Naive thymus-derived CD4-positive, alpha-beta T cell (primary cell): ENCODE measurements at regions of chr2 and their contacts with region 1.

Region 1: GRCh38 chr2:105896765-105897163 is 152.1 kb downstream of the NCK2 start:
- DNase-seq: no peak
- ATAC-seq: no peak
- H3K4me3 ChIP-seq: no peak overlapping the region
- H3K4me3 Mint-ChIP-seq: peak overlapping the region in 2 of 10 donors; percentile 13 to 52
- H3K27ac ChIP-seq: no peak overlapping the region
- H3K27ac Mint-ChIP-seq: peak overlapping the region in 7 of 9 donors; percentile 83 to 92 (median 88)
- H3K4me1 ChIP-seq: peaks cover 11 to 20% of the 10 kb centered on the region in 2 donors
- H3K4me1 Mint-ChIP-seq: peaks cover 17 to 80% (median 60%) of the 10 kb centered on the region in 7 donors
- H3K27me3 ChIP-seq: no peaks in the 10 kb centered on the region
- H3K27me3 Mint-ChIP-seq: no peaks in the 10 kb centered on the region

Region 2: DNA sequence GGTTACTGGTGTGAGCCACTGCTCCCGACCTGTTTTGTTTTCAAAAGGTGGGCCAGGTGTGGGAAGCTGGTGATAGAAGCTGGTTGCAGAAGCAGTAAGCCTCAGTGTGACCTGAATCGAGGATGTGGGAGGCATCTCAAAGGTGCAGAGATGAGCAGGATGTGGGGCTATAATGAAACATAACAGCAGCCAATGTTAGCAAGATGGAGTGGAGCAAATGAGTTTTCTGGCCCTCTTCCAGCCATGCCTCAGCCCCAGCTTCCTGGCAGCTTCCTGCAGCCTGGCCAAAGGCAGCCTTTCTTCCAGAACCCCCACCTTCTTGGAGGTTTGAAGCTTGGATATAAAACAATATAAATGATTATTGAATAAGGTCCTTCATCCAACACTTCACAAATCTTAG is 32.8 kb after region 1 on chr2:
- CTCF ChIA-PET with region 1: no interaction called
- POLR2A ChIA-PET with region 1: no interaction called
- intact Hi-C with region 1: loop called in 1 of 2 experiments (anchors 2 kb)
- DNase-seq: peak in 8 of 9 donors; percentile 31 to 79 (median 70)
- ATAC-seq: peak; percentile 72
- H3K4me3 ChIP-seq: no peak overlapping the region
- H3K4me3 Mint-ChIP-seq: peak overlapping the region in 9 of 10 donors; percentile 51 to 85 (median 64)
- H3K27ac ChIP-seq: peak overlapping the region; percentile 55
- H3K27ac Mint-ChIP-seq: peak overlapping the region; percentile 63 to 97 (median 90)
- H3K4me1 ChIP-seq: peaks cover 61 to 83% of the 10 kb centered on the region in 2 donors
- H3K4me1 Mint-ChIP-seq: peaks cover 48 to 76% (median 71%) of the 10 kb centered on the region in 7 donors
- H3K27me3 ChIP-seq: no peaks in the 10 kb centered on the region
- H3K27me3 Mint-ChIP-seq: no peaks in the 10 kb centered on the region

Region 3: GRCh38 chr2:105990624-105991023 is 93.9 kb after region 1 on chr2:
- CTCF ChIA-PET with region 1: no interaction called
- POLR2A ChIA-PET with region 1: no interaction called
- intact Hi-C with region 1: no loop called
- DNase-seq: no peak
- ATAC-seq: no peak
- H3K4me3 ChIP-seq: peak overlapping the region; percentile 8
- H3K4me3 Mint-ChIP-seq: peak overlapping the region in 3 of 10 donors; percentile 12 to 71 (median 68)
- H3K27ac ChIP-seq: no peak overlapping the region
- H3K27ac Mint-ChIP-seq: peak overlapping the region in 3 of 9 donors; percentile 43 to 74 (median 62)
- H3K4me1 ChIP-seq: peaks cover 7 to 27% of the 10 kb centered on the region in 2 donors
- H3K4me1 Mint-ChIP-seq: peaks cover 3 to 87% (median 50%) of the 10 kb centered on the region in 7 donors
- H3K27me3 ChIP-seq: no peaks in the 10 kb centered on the region
- H3K27me3 Mint-ChIP-seq: no peaks in the 10 kb centered on the region

Region 4: DNA sequence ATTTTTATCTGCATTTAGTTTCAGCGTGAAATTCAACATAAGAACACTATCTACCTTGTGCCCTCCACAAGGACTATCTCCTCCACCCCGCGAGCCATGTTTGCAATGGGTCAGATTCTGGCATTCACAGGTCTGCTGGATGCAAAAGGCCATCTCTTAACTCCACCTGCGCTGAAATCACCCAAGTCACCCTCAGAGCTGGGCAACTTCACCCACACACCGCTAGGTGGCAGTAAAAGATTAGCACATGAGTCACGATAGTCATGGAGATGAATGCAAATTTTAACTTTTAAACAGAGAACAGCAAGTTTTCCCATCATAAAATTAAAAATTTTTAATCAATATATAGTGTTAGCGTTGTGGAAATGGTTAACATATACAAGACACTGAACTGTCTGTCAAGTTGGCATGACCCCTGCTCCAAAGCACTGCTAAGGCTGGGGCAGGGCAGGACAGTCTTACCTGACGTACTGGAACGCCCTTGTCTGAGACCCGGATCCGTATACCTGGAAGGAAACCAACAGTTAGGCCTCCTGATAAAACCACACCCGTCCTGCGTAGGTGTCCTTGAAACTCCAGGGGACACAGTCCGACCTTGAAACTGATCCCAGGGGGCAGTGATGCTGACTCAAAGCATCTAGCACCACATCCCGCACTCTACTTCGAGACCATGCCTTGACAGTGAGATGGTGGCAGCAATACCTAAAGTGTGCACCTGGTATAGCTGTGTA is 207.7 kb after region 1 on chr2:
- CTCF ChIA-PET with region 1: no interaction called
- POLR2A ChIA-PET with region 1: no interaction called
- intact Hi-C with region 1: no loop called
- DNase-seq: peak in 8 of 9 donors; percentile 55 to 78 (median 70)
- ATAC-seq: peak; percentile 84
- H3K4me3 ChIP-seq: no peak overlapping the region
- H3K4me3 Mint-ChIP-seq: no peak overlapping the region
- H3K27ac ChIP-seq: no peak overlapping the region
- H3K27ac Mint-ChIP-seq: peak overlapping the region in 7 of 9 donors; percentile 3 to 73 (median 21)
- H3K4me1 ChIP-seq: no peaks in the 10 kb centered on the region
- H3K4me1 Mint-ChIP-seq: peaks cover 0 to 20% (median 13%) of the 10 kb centered on the region in 7 donors
- H3K27me3 ChIP-seq: no peaks in the 10 kb centered on the region
- H3K27me3 Mint-ChIP-seq: no peaks in the 10 kb centered on the region